ENCODE measurements at regions of chr3 and their contacts with region 1.

Region 1: DNA sequence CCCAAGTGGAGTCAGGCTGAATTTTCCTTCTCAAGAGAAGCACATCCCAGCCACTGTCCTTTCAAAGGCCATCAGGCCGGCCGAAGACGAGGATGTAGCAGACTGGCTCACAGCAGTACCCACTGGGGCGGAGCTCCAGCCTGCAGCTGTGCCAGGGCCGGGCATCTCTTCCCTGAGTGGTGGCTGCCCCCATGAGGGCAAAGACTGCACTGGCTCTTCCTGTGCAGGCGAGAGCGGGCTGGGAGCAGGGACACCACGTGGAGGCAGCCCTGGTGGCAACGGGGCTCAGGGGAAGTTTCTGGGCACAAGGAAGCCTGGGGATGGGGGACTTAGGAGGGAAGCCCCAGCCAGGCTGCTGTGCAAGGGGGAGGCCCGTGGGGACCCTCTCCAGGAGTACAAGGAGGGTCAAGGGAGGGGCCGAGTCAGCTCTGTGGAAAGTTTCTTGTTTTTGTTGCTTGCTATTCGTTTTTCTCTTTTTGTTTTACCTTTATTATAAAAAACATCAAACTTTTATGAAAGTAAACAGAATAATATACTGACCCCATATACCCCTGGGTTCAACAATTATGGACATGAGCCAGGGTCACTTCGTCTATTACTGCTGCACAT is 66.1 kb downstream of the RPN1 start:
- DNase-seq: peak; percentile 91
- H3K4me3 ChIP-seq: no peak overlapping the region
- H3K27ac ChIP-seq: no peak overlapping the region
- H3K4me1 ChIP-seq: peaks cover 2% of the 10 kb centered on the region
- H3K27me3 ChIP-seq: no peaks in the 10 kb centered on the region
- CTCF ChIP-seq: peak; percentile 92

Region 2: GRCh38 chr3:128503164-128503651 is 81.3 kb before region 1 on chr3:
- CTCF ChIA-PET with region 1: no interaction called
- POLR2A ChIA-PET with region 1: no interaction called
- intact Hi-C with region 1: loop called (anchors 5 kb)
- DNase-seq: peak; percentile 21
- H3K4me3 ChIP-seq: no peak overlapping the region
- H3K27ac ChIP-seq: no peak overlapping the region
- H3K4me1 ChIP-seq: no peaks in the 10 kb centered on the region
- H3K27me3 ChIP-seq: no peaks in the 10 kb centered on the region
- CTCF ChIP-seq: 0 out of 2 replicates have a peak, but pooled peaks have one; percentile 26

Measured in A673 (cell line).